ENCODE measurements at regions of chr2 and their contacts with region 1.

Region 1: GRCh38 chr2:212548450-212548819 is 9.8 kb upstream of the ERBB4 start:
- DNase-seq: peak; percentile 29 to 36
- H3K4me3 ChIP-seq: no peak overlapping the region
- H3K27ac ChIP-seq: no peak overlapping the region
- H3K4me1 ChIP-seq: peaks cover 0 to 8% of the 10 kb centered on the region in 2 donors
- H3K27me3 ChIP-seq: no peaks in the 10 kb centered on the region
- CTCF ChIP-seq: peak in 4 of 6 experiments; percentile 60 to 85 (median 77)
- POLR2A ChIP-seq: no peak

Region 2: GRCh38 chr2:212147921-212148513 is 400.4 kb before region 1 on chr2:
- intact Hi-C with region 1: loop called (anchors 10 kb)
- DNase-seq: no peak
- H3K4me3 ChIP-seq: no peak overlapping the region
- H3K27ac ChIP-seq: no peak overlapping the region
- H3K4me1 ChIP-seq: no peaks in the 10 kb centered on the region
- H3K27me3 ChIP-seq: no peaks in the 10 kb centered on the region
- CTCF ChIP-seq: peak in 4 of 6 experiments; percentile 17 to 62 (median 51)
- POLR2A ChIP-seq: no peak

Region 3: GRCh38 chr2:212451786-212452231 is 96.6 kb before region 1 on chr2:
- intact Hi-C with region 1: no loop called
- DNase-seq: no peak
- H3K4me3 ChIP-seq: no peak overlapping the region
- H3K27ac ChIP-seq: no peak overlapping the region
- H3K4me1 ChIP-seq: no peaks in the 10 kb centered on the region
- H3K27me3 ChIP-seq: no peaks in the 10 kb centered on the region
- CTCF ChIP-seq: no peak
- POLR2A ChIP-seq: no peak